Activated B cell treated with CpG ODN at 0.5 μM for 24 hours (primary cell): ENCODE measurements at regions of chr4 and their contacts with region 1.

Region 1: GRCh38 chr4:112099701-112100297 is 45.5 kb upstream of the FAM241A start:
- DNase-seq: no peak
- ATAC-seq: peak; percentile 50
- H3K4me3 Mint-ChIP-seq: no peak overlapping the region
- H3K27ac Mint-ChIP-seq: no peak overlapping the region
- H3K4me1 Mint-ChIP-seq: no peaks in the 10 kb centered on the region
- H3K27me3 Mint-ChIP-seq: no peaks in the 10 kb centered on the region
- CTCF ChIP-seq: peak; percentile 52

Region 2: GRCh38 chr4:112145326-112145819 is 45.6 kb after region 1 on chr4 and contains the start of gene FAM241A:
- CTCF ChIA-PET with region 1: no interaction called
- POLR2A ChIA-PET with region 1: no interaction called
- intact Hi-C with region 1: loop called (anchors 5 kb)
- DNase-seq: peak; percentile 86
- ATAC-seq: peak; percentile 97
- H3K4me3 Mint-ChIP-seq: peak within 1 kb of the TSS; percentile 97
- H3K27ac Mint-ChIP-seq: peak within 1 kb of the TSS; percentile 80
- H3K4me1 Mint-ChIP-seq: peaks cover 19% of the 10 kb centered on the region
- H3K27me3 Mint-ChIP-seq: peaks cover 5% of the 10 kb centered on the region
- CTCF ChIP-seq: no peak
- total RNA-seq, gene FAM241A: 1.1 and 1.5 TPM in 2 replicates

Region 3: DNA sequence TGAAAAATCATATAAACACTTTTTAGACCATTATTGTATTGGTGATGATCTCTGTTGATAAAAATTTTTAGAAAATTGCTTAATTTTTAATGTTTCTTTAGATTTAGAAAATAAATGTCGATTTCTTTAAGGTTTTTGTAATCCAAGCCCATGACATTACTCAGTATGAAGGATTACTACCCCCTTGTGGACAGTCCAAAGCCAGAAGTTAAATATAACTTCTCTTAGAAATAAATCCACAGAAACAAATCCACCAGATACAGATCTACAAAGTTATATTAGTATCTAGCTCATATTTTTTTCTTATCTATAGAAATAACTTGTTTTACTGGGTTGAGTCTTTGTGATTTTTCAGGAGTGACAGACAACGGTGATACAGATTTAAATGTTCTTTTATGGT is 167.0 kb after region 1 on chr4:
- CTCF ChIA-PET with region 1: interaction called, 8 read pairs
- POLR2A ChIA-PET with region 1: no interaction called
- intact Hi-C with region 1: loop called (anchors 1 kb)
- DNase-seq: no peak
- ATAC-seq: no peak
- H3K4me3 Mint-ChIP-seq: no peak overlapping the region
- H3K27ac Mint-ChIP-seq: no peak overlapping the region
- H3K4me1 Mint-ChIP-seq: peaks cover 2% of the 10 kb centered on the region
- H3K27me3 Mint-ChIP-seq: no peaks in the 10 kb centered on the region
- CTCF ChIP-seq: no peak

Region 4: GRCh38 chr4:112321776-112322684 is 222.2 kb after region 1 on chr4:
- CTCF ChIA-PET with region 1: interaction called, 3 read pairs
- POLR2A ChIA-PET with region 1: no interaction called
- intact Hi-C with region 1: loop called (anchors 2 kb)
- DNase-seq: peak; percentile 39
- ATAC-seq: peak; percentile 73
- H3K4me3 Mint-ChIP-seq: no peak overlapping the region
- H3K27ac Mint-ChIP-seq: no peak overlapping the region
- H3K4me1 Mint-ChIP-seq: peaks cover 15% of the 10 kb centered on the region
- H3K27me3 Mint-ChIP-seq: no peaks in the 10 kb centered on the region
- CTCF ChIP-seq: peak; percentile 97

Region 5: DNA sequence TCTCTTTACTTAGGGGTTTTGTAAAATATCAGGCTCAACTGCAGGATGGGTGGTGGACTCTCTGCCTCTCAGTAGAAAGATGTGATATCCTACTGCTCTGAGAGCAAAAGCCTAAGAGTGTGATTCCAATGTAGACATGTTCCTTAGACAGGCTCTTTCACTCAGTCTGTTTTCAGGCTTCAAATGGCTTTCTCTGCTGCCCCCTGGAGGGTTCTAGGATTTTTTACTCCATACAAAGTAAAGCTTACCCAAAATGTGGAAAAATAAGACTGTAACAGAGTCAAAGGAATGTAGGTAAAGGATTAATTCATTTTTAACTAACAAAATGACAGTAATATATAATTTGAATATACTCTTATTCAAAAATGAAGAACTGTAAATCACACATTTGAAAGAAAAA is 504.8 kb after region 1 on chr4:
- CTCF ChIA-PET with region 1: interaction called, 33 read pairs
- POLR2A ChIA-PET with region 1: no interaction called
- intact Hi-C with region 1: loop called (anchors 1 kb)
- DNase-seq: no peak
- ATAC-seq: no peak
- H3K4me3 Mint-ChIP-seq: no peak overlapping the region
- H3K27ac Mint-ChIP-seq: no peak overlapping the region
- H3K4me1 Mint-ChIP-seq: no peaks in the 10 kb centered on the region
- H3K27me3 Mint-ChIP-seq: no peaks in the 10 kb centered on the region
- CTCF ChIP-seq: peak; percentile 84

Region 6: DNA sequence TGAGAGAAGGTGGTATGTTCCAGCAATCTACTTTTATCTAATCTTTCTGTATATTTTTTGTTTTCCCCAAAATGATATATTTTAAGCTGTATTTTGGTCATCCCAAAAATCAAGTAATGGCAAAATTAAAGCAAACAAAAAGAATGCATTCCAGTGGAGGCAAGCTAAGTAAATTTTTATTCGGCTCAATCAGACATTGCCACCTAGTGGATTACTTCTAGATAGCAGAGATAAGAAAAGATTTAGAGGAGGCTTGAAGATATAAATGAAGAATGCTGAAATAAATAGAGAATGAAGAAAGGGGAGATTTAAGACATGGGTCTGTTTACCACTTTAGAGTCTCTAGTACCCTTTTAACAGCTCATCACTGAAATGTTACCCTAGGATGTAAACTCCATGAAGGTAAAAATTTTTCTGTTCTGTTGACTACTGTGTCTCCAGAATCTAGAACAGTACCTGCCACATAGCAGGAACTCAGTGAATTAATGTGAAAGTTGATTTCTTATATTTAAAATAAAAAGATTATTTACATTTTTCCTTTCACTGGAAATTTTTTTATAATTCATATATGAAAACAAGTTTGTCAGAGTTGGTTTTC is 838.8 kb after region 1 on chr4:
- CTCF ChIA-PET with region 1: interaction called, 7 read pairs
- POLR2A ChIA-PET with region 1: no interaction called
- intact Hi-C with region 1: loop called (anchors 5 kb)
- DNase-seq: no peak
- ATAC-seq: no peak
- H3K4me3 Mint-ChIP-seq: no peak overlapping the region
- H3K27ac Mint-ChIP-seq: no peak overlapping the region
- H3K4me1 Mint-ChIP-seq: no peaks in the 10 kb centered on the region
- H3K27me3 Mint-ChIP-seq: peaks cover 4% of the 10 kb centered on the region
- CTCF ChIP-seq: no peak

Region 7: GRCh38 chr4:112951362-112952312 is 851.8 kb after region 1 on chr4:
- CTCF ChIA-PET with region 1: no interaction called
- POLR2A ChIA-PET with region 1: no interaction called
- intact Hi-C with region 1: loop called (anchors 5 kb)
- DNase-seq: no peak
- ATAC-seq: no peak
- H3K4me3 Mint-ChIP-seq: no peak overlapping the region
- H3K27ac Mint-ChIP-seq: no peak overlapping the region
- H3K4me1 Mint-ChIP-seq: peaks cover 2% of the 10 kb centered on the region
- H3K27me3 Mint-ChIP-seq: peaks cover 3% of the 10 kb centered on the region
- CTCF ChIP-seq: no peak